ENCODE measurements at regions of chr15 and their contacts with region 1.

Region 1: DNA sequence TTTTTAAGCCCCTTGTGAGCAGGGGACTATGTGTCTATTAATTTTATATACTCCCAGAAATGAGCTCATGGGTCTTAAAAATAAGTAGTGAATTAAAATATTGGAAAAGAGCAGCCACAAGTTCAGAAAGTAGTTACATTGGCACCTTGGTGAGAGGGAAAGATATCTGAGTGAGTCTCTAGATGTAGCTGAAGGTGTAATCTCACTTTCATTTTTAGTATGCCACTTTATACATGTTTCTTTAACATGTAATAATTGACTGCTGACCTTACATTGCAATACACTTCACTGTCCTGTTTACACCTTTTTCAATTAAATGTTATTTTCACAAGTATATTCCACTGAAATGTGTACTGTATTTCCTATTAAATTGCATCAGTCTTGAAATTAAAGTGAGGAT is 12.1 kb upstream of the PAK6 start:
- DNase-seq: no peak

Region 2: GRCh38 chr15:39997031-39997430 is 229.7 kb before region 1 on chr15:
- in situ Hi-C with region 1: no loop called
- DNase-seq: no peak

Region 3: DNA sequence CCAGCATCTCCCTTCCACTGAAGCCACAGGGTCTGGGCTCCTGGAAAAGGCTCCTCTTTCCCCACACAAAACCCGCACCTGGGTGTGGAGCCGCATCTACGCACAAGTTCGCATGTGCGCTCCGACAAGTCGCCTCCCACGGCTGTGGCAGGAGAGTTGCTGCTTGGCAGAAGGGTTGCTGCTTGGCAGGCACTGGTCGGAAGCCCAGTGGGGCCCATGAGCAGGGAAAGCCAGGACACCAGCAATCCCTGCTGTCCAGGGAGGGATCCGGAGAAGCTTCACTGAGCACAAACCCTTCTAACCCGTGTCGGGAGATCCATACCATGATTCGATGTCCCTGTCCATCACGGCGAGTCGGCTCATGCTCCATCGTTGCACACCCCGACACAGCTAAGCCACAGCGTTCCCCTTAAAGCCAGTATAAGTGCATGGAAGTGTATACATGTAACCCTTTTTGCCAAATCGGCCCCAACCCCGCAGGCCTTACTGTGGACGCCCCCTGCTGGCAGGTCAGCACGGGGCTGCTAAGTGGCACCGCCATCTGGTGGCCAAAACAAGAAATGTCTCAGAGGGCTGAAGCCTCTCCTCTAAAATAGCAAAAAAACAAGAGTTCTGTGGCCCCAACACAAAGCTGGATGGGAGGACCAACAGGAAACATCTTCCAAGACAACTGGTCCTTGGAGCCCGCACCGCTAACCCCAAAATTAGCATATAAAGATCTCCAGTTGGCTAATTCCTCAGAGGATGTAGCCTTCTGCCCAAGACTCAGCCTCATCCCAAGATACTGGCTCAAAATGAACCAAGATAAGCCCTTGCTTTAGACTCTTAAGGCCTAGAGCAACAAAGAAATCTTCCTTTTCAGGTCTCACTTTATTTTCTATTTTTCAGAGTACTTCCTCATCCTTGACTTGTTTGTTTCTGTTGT is 47.9 kb after region 1 on chr15:
- in situ Hi-C with region 1: loop called (anchors 10 kb)
- DNase-seq: peak; percentile 71

Measured in ACHN (cell line).